MCF 10A (cell line): ENCODE measurements at regions of chr10 and their contacts with region 1.

Region 1: DNA sequence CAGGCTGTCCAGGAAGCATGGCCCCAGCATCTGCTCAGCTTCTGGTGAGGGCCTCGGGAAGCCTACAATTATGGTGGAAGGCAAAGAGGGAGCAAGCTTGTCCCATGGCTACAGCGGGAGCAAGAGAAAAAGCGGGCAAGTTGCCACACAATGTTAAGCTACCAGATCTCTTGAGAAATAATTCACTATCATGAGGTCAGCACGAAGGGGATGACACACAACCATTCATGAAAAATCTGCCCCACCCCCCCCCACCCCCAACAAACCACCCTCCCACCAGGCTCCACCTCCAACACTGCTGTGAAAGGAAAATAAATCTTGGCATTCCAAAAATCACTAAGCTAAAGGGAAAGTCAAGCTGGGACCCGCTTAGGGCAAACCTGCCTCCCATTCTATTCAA is 545.8 kb upstream of the NRP1 start:
- DNase-seq: peak; percentile 84
- H3K4me3 Mint-ChIP-seq: no peak overlapping the region
- H3K27ac Mint-ChIP-seq: no peak overlapping the region
- H3K4me1 Mint-ChIP-seq: peaks cover 18% of the 10 kb centered on the region
- H3K27me3 Mint-ChIP-seq: no peaks in the 10 kb centered on the region
- CTCF ChIP-seq: no peak

Region 2: DNA sequence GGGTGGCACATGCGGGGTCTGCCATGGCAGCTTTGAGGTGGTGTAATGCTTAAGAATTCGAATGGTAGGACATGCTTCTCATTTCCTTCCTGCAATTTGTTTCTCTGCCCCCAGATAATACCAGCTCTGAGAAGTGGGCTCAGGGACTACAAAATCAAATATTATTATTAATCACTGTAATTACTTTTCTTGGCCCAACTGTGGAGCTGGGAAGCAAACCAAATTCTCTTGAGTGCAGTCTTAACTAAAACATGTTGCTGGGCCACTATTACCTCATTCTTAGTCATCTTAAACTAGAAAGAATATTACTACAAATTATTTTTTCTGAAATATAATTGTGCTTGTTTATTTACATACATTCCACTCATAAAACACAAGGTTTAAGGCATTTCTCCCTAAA is 20.9 kb after region 1 on chr10:
- CTCF ChIA-PET with region 1: no interaction called
- POLR2A ChIA-PET with region 1: no interaction called
- intact Hi-C with region 1: loop called (anchors 1 kb)
- DNase-seq: peak; percentile 63
- H3K4me3 Mint-ChIP-seq: no peak overlapping the region
- H3K27ac Mint-ChIP-seq: peak overlapping the region; percentile 27
- H3K4me1 Mint-ChIP-seq: peaks cover 44% of the 10 kb centered on the region
- H3K27me3 Mint-ChIP-seq: no peaks in the 10 kb centered on the region
- CTCF ChIP-seq: no peak

Region 3: GRCh38 chr10:34010891-34011290 is 130.6 kb after region 1 on chr10:
- CTCF ChIA-PET with region 1: no interaction called
- POLR2A ChIA-PET with region 1: no interaction called
- intact Hi-C with region 1: no loop called
- DNase-seq: no peak
- H3K4me3 Mint-ChIP-seq: no peak overlapping the region
- H3K27ac Mint-ChIP-seq: no peak overlapping the region
- H3K4me1 Mint-ChIP-seq: no peaks in the 10 kb centered on the region
- H3K27me3 Mint-ChIP-seq: no peaks in the 10 kb centered on the region
- CTCF ChIP-seq: no peak